ENCODE measurements at regions of chr2 and their contacts with region 1.

Region 1: GRCh38 chr2:9768388-9768787 is 74.9 kb upstream of the TAF1B start:
- DNase-seq: no peak
- ATAC-seq: peak; percentile 22

Region 2: GRCh38 chr2:9630749-9631483 is 137.5 kb before region 1 on chr2 and contains the start of gene YWHAQ:
- intact Hi-C with region 1: loop called (anchors 10 kb)
- DNase-seq: peak; percentile 99
- ATAC-seq: peak; percentile 95
- total RNA-seq, gene YWHAQ: 119 TPM

Region 3: DNA sequence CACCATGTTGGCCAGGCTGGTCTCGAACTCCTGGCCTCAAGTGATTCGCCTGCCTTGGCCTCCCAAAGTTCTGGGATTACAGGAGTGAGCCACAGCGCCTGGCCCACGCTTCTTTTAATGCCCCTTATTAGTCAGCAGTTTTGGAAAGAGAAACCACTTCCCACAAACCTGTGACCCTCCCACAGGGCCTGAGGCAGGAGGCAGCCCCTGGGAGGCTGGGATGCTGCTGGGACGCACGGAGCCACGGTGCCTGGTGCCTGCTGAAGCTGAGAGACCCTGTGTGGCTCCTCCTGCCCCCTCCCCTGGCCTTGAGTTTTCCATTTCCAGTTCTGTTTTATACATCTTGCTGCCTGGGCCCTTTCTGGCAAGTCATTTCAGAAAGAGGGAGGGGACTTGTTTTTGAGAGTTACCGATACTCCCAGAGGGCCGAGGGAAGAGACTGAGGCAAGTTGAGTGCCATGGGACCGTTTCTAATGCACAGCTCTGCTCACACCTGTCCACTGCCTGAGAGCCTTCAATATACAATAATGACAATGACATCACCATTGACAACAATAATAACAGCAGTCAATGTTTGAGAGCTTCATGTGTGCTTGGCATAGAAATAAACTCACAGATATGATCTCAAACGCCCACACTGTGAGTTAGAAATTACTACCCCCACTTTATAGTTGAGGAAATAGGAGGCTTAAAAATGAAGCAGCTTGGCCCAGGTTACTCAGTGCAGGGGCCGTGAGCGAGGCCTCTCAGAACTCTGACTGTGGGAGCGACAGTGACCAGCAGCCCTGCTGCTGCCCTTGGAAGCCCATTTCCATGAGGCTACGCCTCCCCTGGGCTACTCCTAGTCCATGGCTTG is 59.5 kb before region 1 on chr2:
- intact Hi-C with region 1: no loop called
- DNase-seq: no peak
- ATAC-seq: no peak

Region 4: GRCh38 chr2:9799665-9800632 is 31.6 kb after region 1 on chr2:
- intact Hi-C with region 1: no loop called
- DNase-seq: peak; percentile 93
- ATAC-seq: peak; percentile 85